Activated CD4-positive, alpha-beta T cell treated with anti-CD3 and anti-CD28 coated beads for 36 hours (primary cell): ENCODE measurements at regions of chr12 and their contacts with region 1.

Region 1: DNA sequence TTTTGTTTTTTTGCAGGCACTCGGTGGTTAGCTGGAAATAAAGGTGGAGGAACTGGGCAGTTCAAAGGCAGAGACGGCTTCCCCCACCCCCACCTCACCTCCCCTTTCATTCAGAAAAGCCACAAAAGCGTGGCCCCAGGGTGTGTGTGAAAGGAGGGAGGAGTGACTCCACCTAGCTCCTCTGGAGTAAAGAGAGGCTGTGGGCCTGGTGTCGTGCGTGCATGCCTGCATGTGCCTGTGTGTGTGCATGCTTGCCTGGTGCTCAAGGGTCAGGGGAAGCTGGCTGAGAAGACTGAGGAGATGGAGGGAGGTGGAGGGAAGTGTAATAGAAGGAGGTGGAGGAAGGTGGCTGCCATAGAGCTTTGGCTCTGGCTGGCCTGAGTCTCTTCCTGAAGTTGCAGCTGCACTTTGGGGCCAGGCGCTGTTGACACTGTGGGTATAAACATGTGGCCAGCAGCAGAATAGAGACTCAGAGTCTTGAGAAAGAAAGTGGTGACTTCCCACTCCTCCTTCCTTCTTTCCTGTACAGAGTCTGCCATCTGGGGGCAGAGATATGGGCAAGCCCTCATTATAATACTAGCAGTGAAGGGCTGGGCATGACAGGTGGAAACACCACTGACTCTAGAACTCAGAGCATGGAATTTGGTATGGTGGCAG is 36.9 kb upstream of the SINHCAF start:
- DNase-seq: peak; percentile 64
- ATAC-seq: peak; percentile 85
- H3K4me3 Mint-ChIP-seq: peak overlapping the region; percentile 45
- H3K27ac Mint-ChIP-seq: peak overlapping the region; percentile 70
- H3K4me1 Mint-ChIP-seq: peaks cover 14% of the 10 kb centered on the region
- H3K27me3 Mint-ChIP-seq: no peaks in the 10 kb centered on the region

Region 2: GRCh38 chr12:31245822-31246469 is 116.9 kb before region 1 on chr12:
- CTCF ChIA-PET with region 1: interaction called, 4 read pairs
- POLR2A ChIA-PET with region 1: no interaction called
- intact Hi-C with region 1: loop called (anchors 2 to 5 kb)
- DNase-seq: no peak
- ATAC-seq: no peak
- H3K4me3 Mint-ChIP-seq: no peak overlapping the region
- H3K27ac Mint-ChIP-seq: no peak overlapping the region
- H3K4me1 Mint-ChIP-seq: no peaks in the 10 kb centered on the region
- H3K27me3 Mint-ChIP-seq: no peaks in the 10 kb centered on the region